Heart left ventricle (tissue), 16 donors: ENCODE measurements at regions of chr12 and their contacts with region 1.

Region 1: GRCh38 chr12:92561543-92561899 is 141.3 kb upstream of the PLEKHG7 start:
- DNase-seq: peak in 4 of 5 donors; percentile 50 to 73 (median 62)
- ATAC-seq: peak; percentile 86 to 93 (median 90)
- H3K4me3 ChIP-seq: no peak overlapping the region
- H3K27ac ChIP-seq: peak overlapping the region in 11 of 12 donors; percentile 36 to 77 (median 54)
- H3K4me1 ChIP-seq: peaks cover 5 to 37% (median 18%) of the 10 kb centered on the region in 12 donors
- H3K27me3 ChIP-seq: no peaks in the 10 kb centered on the region
- CTCF ChIP-seq: no peak
- POLR2A ChIP-seq: no peak

Region 2: GRCh38 chr12:91577586-91578539 is 983.7 kb before region 1 on chr12:
- intact Hi-C with region 1: loop called in 2 of 10 experiments (anchors 5 to 10 kb)
- DNase-seq: no peak
- ATAC-seq: peak in 2 of 4 donors; percentile 45 to 50
- H3K4me3 ChIP-seq: peak overlapping the region in 9 of 12 donors; percentile 17 to 37 (median 26)
- H3K27ac ChIP-seq: peak overlapping the region in 3 of 12 donors; percentile 10 to 45 (median 35)
- H3K4me1 ChIP-seq: peaks cover 0 to 15% (median 7%) of the 10 kb centered on the region in 12 donors
- H3K27me3 ChIP-seq: no peaks in the 10 kb centered on the region
- CTCF ChIP-seq: peak; percentile 62 to 82 (median 72)
- POLR2A ChIP-seq: no peak

Region 3: DNA sequence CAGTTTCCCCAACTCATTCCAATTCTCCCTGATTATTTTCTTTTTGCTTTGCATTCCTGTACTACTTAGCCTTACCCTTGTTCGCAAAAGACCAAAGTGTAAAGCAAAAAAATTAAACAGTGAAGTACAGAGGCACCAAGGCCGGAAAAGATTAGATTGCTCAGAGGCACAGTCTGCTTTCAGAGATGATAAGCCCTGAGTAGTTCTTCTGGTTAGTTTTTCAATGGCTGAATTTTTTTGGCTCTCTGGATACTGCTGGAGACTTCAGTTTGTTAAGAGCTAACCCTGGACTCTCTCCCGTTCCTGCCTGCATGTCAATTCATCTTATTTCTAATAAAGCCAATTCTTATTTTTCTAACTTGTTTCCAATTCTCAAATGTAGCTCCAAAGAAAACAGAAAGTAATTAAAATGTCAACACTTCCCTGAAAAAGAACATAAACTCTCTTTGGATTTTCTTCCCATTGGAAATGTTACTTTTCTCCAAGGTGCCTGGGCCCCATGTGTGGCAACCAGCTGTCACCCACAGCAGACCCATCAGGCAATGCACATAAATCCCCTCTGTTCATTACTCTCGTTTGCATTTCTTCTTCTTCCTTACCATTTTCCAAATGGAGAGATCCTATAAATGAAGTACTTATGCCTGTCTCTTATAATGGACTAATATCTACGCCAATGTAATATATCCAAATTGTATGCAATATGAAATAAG is 558.7 kb before region 1 on chr12:
- intact Hi-C with region 1: loop called in 3 of 10 experiments (anchors 10 kb)
- DNase-seq: no peak
- ATAC-seq: peak; percentile 67 to 73 (median 70)
- H3K4me3 ChIP-seq: no peak overlapping the region
- H3K27ac ChIP-seq: peak overlapping the region in 10 of 12 donors; percentile 4 to 72 (median 44)
- H3K4me1 ChIP-seq: peaks cover 0 to 30% (median 12%) of the 10 kb centered on the region in 12 donors
- H3K27me3 ChIP-seq: no peaks in the 10 kb centered on the region
- CTCF ChIP-seq: no peak
- POLR2A ChIP-seq: no peak

Region 4: GRCh38 chr12:92414170-92415070 is 147.1 kb before region 1 on chr12:
- intact Hi-C with region 1: loop called in 5 of 10 experiments (anchors 5 to 10 kb)
- DNase-seq: no peak
- ATAC-seq: no peak
- H3K4me3 ChIP-seq: no peak overlapping the region
- H3K27ac ChIP-seq: peak overlapping the region in 3 of 12 donors; percentile 1 to 14 (median 8)
- H3K4me1 ChIP-seq: peaks cover 0 to 40% (median 12%) of the 10 kb centered on the region in 12 donors
- H3K27me3 ChIP-seq: no peaks in the 10 kb centered on the region
- CTCF ChIP-seq: peak in 1 of 12 donors; percentile 12
- POLR2A ChIP-seq: no peak

Region 5: DNA sequence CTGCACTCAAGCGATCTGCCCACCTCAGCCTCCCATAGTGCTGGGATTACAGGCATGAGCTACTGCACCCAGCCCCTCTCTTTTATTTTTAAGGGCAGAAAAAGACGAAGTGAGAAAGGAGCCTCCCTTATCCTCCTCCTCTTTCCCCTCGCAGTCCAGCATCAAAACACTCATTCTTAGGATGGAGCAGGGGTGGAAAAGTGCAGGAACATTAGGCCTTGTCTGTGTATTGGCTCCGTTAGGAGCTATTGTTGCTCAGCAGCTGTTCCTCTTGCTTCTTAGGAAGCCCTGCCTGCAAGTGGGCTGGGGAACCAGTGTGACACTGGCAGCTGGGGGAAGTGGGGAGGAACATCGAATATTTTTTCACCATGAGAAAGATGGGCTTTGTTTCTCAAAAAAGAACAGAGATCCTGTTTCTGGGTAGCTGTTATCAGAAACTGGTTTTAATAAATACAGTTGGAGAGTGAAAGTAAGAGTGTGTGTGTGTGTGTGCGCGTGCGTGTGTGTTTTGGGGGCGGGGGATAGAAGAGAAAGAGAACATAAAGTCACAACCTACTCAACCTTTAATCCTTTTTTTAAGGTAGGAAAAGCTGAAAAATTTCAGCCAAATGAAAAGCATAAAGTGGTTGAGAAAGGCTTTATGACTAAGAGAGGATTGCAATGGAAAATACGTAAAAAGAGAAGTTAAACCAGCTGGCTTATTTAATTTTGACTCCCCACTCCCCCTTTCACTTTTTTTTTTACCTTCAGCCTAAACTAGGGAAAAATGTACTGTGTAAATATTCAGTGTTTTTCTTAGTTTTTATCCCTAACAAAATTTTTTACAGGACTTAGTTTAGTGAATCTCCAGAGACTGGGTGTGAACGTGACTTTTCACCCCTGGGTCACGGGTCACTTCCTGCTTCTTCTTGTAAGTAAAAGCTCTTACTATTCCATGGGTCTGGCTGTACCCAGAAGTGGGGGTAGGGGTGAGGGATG is 56.0 kb before region 1 on chr12:
- intact Hi-C with region 1: loop called in 3 of 10 experiments (anchors 5 to 10 kb)
- DNase-seq: peak; percentile 67 to 81 (median 70)
- ATAC-seq: peak; percentile 71 to 87 (median 80)
- H3K4me3 ChIP-seq: peak overlapping the region in 10 of 12 donors; percentile 11 to 40 (median 26)
- H3K27ac ChIP-seq: peak overlapping the region; percentile 55 to 96 (median 85)
- H3K4me1 ChIP-seq: peaks cover 5 to 59% (median 38%) of the 10 kb centered on the region in 12 donors
- H3K27me3 ChIP-seq: no peaks in the 10 kb centered on the region
- CTCF ChIP-seq: no peak
- POLR2A ChIP-seq: no peak

Region 6: GRCh38 chr12:92784356-92784755 is 222.8 kb after region 1 on chr12:
- intact Hi-C with region 1: no loop called
- DNase-seq: no peak
- ATAC-seq: no peak
- H3K4me3 ChIP-seq: no peak overlapping the region
- H3K27ac ChIP-seq: peak overlapping the region in 1 of 12 donors; percentile 4
- H3K4me1 ChIP-seq: peaks cover 0 to 30% (median 10%) of the 10 kb centered on the region in 12 donors
- H3K27me3 ChIP-seq: no peaks in the 10 kb centered on the region
- CTCF ChIP-seq: no peak
- POLR2A ChIP-seq: no peak